ENCODE measurements at regions of chr5 and their contacts with region 1.

Region 1: DNA sequence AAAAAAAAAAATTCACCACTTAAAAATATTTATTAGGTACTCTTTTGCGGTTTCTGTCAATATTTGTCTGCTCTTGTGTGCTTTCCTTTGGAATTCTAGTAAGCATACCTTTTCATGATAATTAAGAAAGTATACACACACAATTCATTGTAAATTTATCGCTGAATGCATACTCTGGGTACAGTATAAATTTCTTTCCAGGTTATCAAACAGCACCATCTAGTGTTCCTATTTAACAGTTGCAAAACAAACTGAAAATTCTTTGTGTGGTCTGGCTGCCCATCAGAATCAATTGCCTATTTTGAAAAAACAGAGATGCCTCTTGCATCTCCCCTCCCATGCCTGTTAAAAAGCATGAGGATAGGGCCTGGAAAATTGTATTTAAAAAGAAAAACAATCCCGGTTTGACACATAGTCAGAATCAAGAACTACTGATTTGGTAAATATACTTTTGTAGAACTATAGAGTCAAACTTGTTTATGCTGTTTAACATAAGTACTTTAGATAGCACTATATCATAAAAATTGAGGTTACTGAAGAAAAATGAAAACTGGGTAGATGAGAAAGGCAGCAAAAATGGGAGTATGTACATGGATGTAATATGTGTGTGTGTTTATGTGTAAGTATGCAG is 16.2 kb downstream of the PGGT1B start:
- DNase-seq: no peak
- H3K4me3 Mint-ChIP-seq: no peak overlapping the region
- H3K27ac Mint-ChIP-seq: no peak overlapping the region
- H3K4me1 Mint-ChIP-seq: peaks cover 17% of the 10 kb centered on the region
- H3K27me3 Mint-ChIP-seq: no peaks in the 10 kb centered on the region

Region 2: DNA sequence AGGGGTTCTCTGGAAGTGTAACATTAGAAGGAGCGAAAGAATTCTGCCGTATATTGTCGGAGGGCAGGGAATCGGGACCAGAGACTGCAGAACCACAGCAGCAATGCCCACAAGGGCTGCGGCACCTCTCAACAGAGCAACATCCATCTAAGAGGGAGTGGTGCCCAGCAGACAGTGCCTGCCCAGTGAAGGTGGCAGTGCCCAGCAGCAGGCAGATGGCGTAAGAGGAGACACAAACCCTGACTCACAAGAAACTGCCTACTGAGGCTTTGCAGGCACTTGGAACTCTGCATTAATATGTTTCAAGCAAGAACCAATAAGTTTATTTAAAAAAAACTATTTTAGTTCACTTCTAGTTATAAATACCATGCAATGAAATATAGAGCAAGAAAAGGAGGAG is 448.5 kb before region 1 on chr5:
- CTCF ChIA-PET with region 1: no interaction called
- POLR2A ChIA-PET with region 1: no interaction called
- DNase-seq: no peak
- H3K4me3 Mint-ChIP-seq: no peak overlapping the region
- H3K27ac Mint-ChIP-seq: no peak overlapping the region
- H3K4me1 Mint-ChIP-seq: no peaks in the 10 kb centered on the region
- H3K27me3 Mint-ChIP-seq: no peaks in the 10 kb centered on the region

Region 3: DNA sequence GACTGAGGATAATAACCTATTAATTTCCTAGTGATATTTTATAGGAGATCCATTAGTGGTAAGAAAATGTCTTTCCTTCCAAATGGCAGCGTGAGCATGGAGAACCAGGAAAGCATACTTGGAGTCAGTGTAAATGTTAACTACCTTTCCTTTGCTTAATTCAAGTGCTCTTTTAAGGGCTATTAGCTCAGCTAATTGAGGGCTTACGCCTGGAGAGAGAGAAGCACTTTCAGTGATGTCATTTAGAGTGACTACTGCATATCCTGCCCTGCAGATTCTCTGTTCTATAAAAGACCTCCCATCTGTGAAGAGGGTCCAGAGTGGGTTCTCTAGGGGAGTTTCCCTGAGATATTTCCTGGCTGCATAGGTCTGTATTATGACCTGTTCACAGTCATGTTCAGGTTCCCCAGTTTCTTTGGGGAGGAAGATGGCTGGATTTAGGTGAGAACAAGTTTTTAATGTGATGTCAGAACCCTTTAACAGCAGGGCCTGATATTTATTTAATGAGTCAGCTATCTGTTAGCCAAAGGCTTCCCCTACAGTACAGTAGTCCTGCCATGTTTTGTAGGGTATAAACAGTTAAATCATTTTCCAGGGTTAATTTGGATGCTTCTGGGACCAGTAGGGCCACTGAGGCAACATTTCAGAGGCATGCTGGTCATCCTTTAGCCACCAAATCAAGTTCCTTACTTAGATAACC is 166.4 kb before region 1 on chr5:
- CTCF ChIA-PET with region 1: no interaction called
- POLR2A ChIA-PET with region 1: no interaction called
- DNase-seq: no peak
- H3K4me3 Mint-ChIP-seq: no peak overlapping the region
- H3K27ac Mint-ChIP-seq: no peak overlapping the region
- H3K4me1 Mint-ChIP-seq: no peaks in the 10 kb centered on the region
- H3K27me3 Mint-ChIP-seq: no peaks in the 10 kb centered on the region

Region 4: DNA sequence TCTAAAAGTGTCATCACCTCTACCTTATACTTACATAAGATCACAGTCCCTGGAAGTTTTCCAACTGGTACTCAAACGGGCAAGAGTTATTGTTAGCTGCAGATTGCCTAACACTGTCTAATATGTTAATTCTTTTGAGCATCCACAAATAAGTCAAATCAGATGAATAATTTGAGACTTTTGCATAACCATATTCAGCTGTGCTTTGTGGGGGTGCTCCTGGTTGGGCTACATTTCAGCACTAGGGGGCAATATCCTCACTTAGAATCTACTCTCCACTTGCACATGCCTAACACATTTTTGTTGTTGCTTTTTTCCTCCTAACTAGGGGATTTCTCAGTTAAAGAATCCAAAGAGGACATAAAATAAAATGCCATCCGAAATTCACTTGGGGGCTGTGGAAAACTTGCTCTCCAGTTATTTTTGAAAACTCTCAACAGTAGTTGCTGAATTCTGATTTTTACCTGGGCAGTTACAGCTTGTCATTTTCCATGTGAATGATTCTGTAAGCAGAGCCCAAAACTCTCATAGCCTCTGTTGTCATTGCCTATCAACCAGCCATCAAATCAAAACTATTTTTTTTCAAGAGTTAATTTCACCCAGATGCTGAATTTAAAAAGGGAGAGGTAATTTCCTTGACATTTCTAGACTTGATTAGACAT is 148.3 kb before region 1 on chr5:
- CTCF ChIA-PET with region 1: interaction called, 52 read pairs
- POLR2A ChIA-PET with region 1: no interaction called
- DNase-seq: peak; percentile 31
- H3K4me3 Mint-ChIP-seq: no peak overlapping the region
- H3K27ac Mint-ChIP-seq: no peak overlapping the region
- H3K4me1 Mint-ChIP-seq: no peaks in the 10 kb centered on the region
- H3K27me3 Mint-ChIP-seq: peaks cover 17% of the 10 kb centered on the region

Measured in activated CD4-positive, alpha-beta memory T cell treated with anti-CD3 and anti-CD28 coated beads, Interleukin-2, amount 10 ng/mL, durations not matched to agents 7 days and 5 days (primary cell).